ENCODE measurements at regions of chr20 and their contacts with region 1.

Region 1: GRCh38 chr20:59571551-59572314 is 32.6 kb upstream of the PHACTR3 start:
- DNase-seq: peak; percentile 23
- H3K4me3 ChIP-seq: peak overlapping the region; percentile 53
- H3K27ac ChIP-seq: no peak overlapping the region
- H3K27me3 ChIP-seq: peaks cover 10% of the 10 kb centered on the region
- CTCF ChIP-seq: peak; percentile 90

Region 2: GRCh38 chr20:59547596-59547995 is 24.1 kb before region 1 on chr20:
- CTCF ChIA-PET with region 1: interaction called, 10 read pairs
- POLR2A ChIA-PET with region 1: no interaction called
- DNase-seq: no peak
- H3K4me3 ChIP-seq: no peak overlapping the region
- H3K27ac ChIP-seq: no peak overlapping the region
- H3K27me3 ChIP-seq: no peaks in the 10 kb centered on the region
- CTCF ChIP-seq: no peak

Region 3: DNA sequence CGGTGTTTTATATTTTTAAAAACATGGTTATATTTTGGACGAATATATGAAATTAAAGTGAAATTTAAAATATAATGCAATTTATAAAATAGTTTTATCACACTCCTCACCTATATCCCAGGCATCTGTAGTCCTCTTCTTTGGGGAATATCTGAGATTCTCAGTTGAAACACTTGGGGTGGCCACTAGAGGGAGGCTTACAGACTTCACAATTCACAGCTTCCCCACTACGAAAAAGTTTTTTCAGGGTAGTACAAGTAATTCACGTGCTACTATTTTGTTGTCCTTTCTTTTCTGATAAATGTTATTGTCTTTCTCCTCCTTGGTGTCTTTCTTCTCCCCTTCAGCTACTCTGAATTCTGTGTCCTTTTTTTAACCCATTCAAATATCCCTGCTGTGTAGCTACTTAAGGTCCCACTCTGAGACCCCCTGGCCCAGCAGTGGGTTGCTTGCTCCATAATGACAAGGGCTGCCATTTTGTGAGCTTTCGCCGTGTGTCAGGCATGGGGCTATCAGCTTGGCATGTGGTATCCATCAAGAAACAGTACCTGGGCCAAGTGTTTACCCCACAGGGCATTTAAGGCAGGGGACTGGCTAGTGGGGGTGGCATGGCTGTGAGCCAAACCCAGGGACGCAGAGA is 11.0 kb before region 1 on chr20:
- CTCF ChIA-PET with region 1: interaction called, 22 read pairs
- POLR2A ChIA-PET with region 1: no interaction called
- DNase-seq: no peak
- H3K4me3 ChIP-seq: no peak overlapping the region
- H3K27ac ChIP-seq: no peak overlapping the region
- H3K27me3 ChIP-seq: no peaks in the 10 kb centered on the region
- CTCF ChIP-seq: peak; percentile 58

Region 4: GRCh38 chr20:59596690-59597089 is 25.0 kb after region 1 on chr20:
- CTCF ChIA-PET with region 1: interaction called, 11 read pairs
- POLR2A ChIA-PET with region 1: no interaction called
- DNase-seq: no peak
- H3K4me3 ChIP-seq: no peak overlapping the region
- H3K27ac ChIP-seq: no peak overlapping the region
- H3K27me3 ChIP-seq: peaks cover 3% of the 10 kb centered on the region
- CTCF ChIP-seq: no peak

Region 5: GRCh38 chr20:59850018-59850641 is 278.4 kb after region 1 on chr20:
- CTCF ChIA-PET with region 1: interaction called, 10 read pairs
- POLR2A ChIA-PET with region 1: no interaction called
- DNase-seq: no peak
- H3K4me3 ChIP-seq: no peak overlapping the region
- H3K27ac ChIP-seq: no peak overlapping the region
- H3K27me3 ChIP-seq: no peaks in the 10 kb centered on the region
- CTCF ChIP-seq: peak; percentile 63

Region 6: GRCh38 chr20:60001108-60001507 is 429.4 kb after region 1 on chr20:
- CTCF ChIA-PET with region 1: no interaction called
- POLR2A ChIA-PET with region 1: no interaction called
- DNase-seq: no peak
- H3K4me3 ChIP-seq: no peak overlapping the region
- H3K27ac ChIP-seq: no peak overlapping the region
- H3K27me3 ChIP-seq: peaks cover 6% of the 10 kb centered on the region
- CTCF ChIP-seq: no peak

Measured in AG04450 (cell line).